CD8-positive, alpha-beta memory T cell (primary cell): ENCODE measurements at regions of chr4 and their contacts with region 1.

Region 1: DNA sequence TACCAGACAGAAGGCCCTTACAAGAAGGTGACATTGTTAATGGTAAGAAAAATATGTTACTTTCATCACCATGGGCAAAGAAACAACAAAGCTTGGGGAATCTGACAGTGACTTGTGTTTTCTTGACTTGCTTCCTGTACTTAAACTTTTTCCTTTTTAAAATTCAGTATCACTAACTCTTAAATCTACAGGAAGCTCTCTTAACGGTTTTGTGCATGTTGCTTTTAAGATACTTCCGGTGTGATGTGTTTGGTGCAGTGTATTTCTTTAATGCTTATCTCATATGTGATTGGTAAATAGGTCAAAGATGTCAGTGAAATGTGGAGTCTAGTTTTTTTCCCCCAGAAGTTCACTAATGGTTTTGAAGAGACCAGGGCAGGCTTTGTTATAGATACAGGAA is 45.2 kb downstream of the ADH5 start:
- DNase-seq: peak in 2 of 5 donors; percentile 47 to 50
- H3K4me3 ChIP-seq: no peak overlapping the region
- H3K4me3 Mint-ChIP-seq: peak overlapping the region in 6 of 7 donors; percentile 4 to 61 (median 40)
- H3K27ac ChIP-seq: peak overlapping the region; percentile 49
- H3K27ac Mint-ChIP-seq: peak overlapping the region; percentile 3 to 87 (median 72)
- H3K4me1 ChIP-seq: peaks cover 22% of the 10 kb centered on the region
- H3K4me1 Mint-ChIP-seq: peaks cover 23 to 27% (median 25%) of the 10 kb centered on the region in 3 donors
- H3K27me3 ChIP-seq: no peaks in the 10 kb centered on the region
- H3K27me3 Mint-ChIP-seq: no peaks in the 10 kb centered on the region

Region 2: GRCh38 chr4:98802770-98803198 is 240.6 kb before region 1 on chr4:
- CTCF ChIA-PET with region 1: no interaction called
- POLR2A ChIA-PET with region 1: no interaction called
- DNase-seq: no peak
- H3K4me3 ChIP-seq: no peak overlapping the region
- H3K4me3 Mint-ChIP-seq: no peak overlapping the region
- H3K27ac ChIP-seq: no peak overlapping the region
- H3K27ac Mint-ChIP-seq: no peak overlapping the region
- H3K4me1 ChIP-seq: no peaks in the 10 kb centered on the region
- H3K4me1 Mint-ChIP-seq: no peaks in the 10 kb centered on the region
- H3K27me3 ChIP-seq: no peaks in the 10 kb centered on the region
- H3K27me3 Mint-ChIP-seq: peaks cover 0 to 4% of the 10 kb centered on the region in 2 donors

Region 3: DNA sequence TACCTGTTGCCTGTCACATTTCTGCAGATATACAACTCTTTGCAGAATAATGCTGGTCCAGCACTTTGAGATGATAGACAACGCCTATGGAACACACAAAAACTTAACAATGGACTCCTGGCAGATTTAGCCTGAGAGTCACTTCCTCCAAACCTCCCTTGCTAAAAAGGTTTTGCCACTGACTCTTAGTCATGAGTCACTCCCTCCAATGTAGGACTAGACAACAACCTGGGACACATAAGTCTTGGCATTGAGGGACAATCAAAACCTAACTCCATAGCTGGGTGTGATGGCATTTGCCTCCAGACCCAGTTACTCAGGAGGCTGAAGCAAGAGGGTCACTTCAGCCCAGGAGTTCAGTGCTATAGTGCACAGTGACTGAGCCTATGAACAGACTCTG is 92.4 kb before region 1 on chr4:
- CTCF ChIA-PET with region 1: no interaction called
- POLR2A ChIA-PET with region 1: no interaction called
- DNase-seq: no peak
- H3K4me3 ChIP-seq: no peak overlapping the region
- H3K4me3 Mint-ChIP-seq: no peak overlapping the region
- H3K27ac ChIP-seq: no peak overlapping the region
- H3K27ac Mint-ChIP-seq: no peak overlapping the region
- H3K4me1 ChIP-seq: no peaks in the 10 kb centered on the region
- H3K4me1 Mint-ChIP-seq: no peaks in the 10 kb centered on the region
- H3K27me3 ChIP-seq: no peaks in the 10 kb centered on the region
- H3K27me3 Mint-ChIP-seq: peaks cover 4 to 11% of the 10 kb centered on the region in 2 donors

Region 4: GRCh38 chr4:99054428-99054994 is 11.2 kb after region 1 on chr4:
- CTCF ChIA-PET with region 1: interaction called, 11 read pairs
- POLR2A ChIA-PET with region 1: interaction called, 10 read pairs
- DNase-seq: no peak
- H3K4me3 ChIP-seq: no peak overlapping the region
- H3K4me3 Mint-ChIP-seq: no peak overlapping the region
- H3K27ac ChIP-seq: no peak overlapping the region
- H3K27ac Mint-ChIP-seq: peak overlapping the region; percentile 9 to 59 (median 20)
- H3K4me1 ChIP-seq: peaks cover 6% of the 10 kb centered on the region
- H3K4me1 Mint-ChIP-seq: peaks cover 15 to 32% (median 29%) of the 10 kb centered on the region in 3 donors
- H3K27me3 ChIP-seq: no peaks in the 10 kb centered on the region
- H3K27me3 Mint-ChIP-seq: no peaks in the 10 kb centered on the region